ENCODE measurements at regions of chr16 and their contacts with region 1.

Region 1: DNA sequence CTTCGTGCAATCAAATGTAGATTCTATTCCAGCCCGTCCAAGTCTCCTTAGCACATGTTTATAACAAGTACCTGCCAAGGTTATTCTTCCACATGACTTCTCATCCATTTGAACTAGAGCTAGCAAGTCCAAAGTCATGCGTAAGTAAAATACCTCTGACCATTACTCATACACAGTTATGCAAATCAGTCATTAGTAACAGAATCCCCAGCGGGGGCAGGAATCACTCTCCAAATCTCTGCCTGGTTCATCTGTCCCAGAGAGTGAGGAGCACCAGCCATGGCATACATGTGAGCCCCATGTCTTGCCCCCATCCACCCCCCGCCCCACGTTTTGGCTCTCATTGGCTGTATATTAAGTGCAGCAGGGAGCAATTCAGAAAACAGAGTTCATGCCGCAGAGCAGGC is 27.7 kb downstream of the SRL start:
- DNase-seq: peak; percentile 36 to 85
- H3K4me3 ChIP-seq: no peak overlapping the region
- H3K27ac ChIP-seq: peak overlapping the region; percentile 93 to 94
- H3K4me1 ChIP-seq: peaks cover 12 to 42% of the 10 kb centered on the region in 2 donors
- H3K27me3 ChIP-seq: no peaks in the 10 kb centered on the region
- CTCF ChIP-seq: no peak

Region 2: GRCh38 chr16:4053301-4053845 is 160.8 kb before region 1 on chr16:
- intact Hi-C with region 1: no loop called
- DNase-seq: peak; percentile 27 to 91
- H3K4me3 ChIP-seq: peak overlapping the region; percentile 35 to 50
- H3K27ac ChIP-seq: peak overlapping the region; percentile 48 to 75
- H3K4me1 ChIP-seq: peaks cover 3 to 15% of the 10 kb centered on the region in 2 donors
- H3K27me3 ChIP-seq: no peaks in the 10 kb centered on the region
- CTCF ChIP-seq: no peak

Region 3: GRCh38 chr16:4183237-4184036 is 30.8 kb before region 1 on chr16:
- intact Hi-C with region 1: loop called (anchors 2 kb)
- DNase-seq: peak; percentile 51 to 95
- H3K4me3 ChIP-seq: peak overlapping the region; percentile 64 to 69
- H3K27ac ChIP-seq: peak overlapping the region; percentile 92 to 93
- H3K4me1 ChIP-seq: peaks cover 0 to 4% of the 10 kb centered on the region in 2 donors
- H3K27me3 ChIP-seq: no peaks in the 10 kb centered on the region
- CTCF ChIP-seq: peak in 1 of 3 experiments; percentile 28

Region 4: GRCh38 chr16:4200000-4200780 is 14.0 kb before region 1 on chr16:
- intact Hi-C with region 1: loop called (anchors 1 kb)
- DNase-seq: peak; percentile 23 to 84
- H3K4me3 ChIP-seq: no peak overlapping the region
- H3K27ac ChIP-seq: no peak overlapping the region
- H3K4me1 ChIP-seq: peaks cover 0 to 2% of the 10 kb centered on the region in 2 donors
- H3K27me3 ChIP-seq: no peaks in the 10 kb centered on the region
- CTCF ChIP-seq: peak; percentile 80 to 86 (median 84)